ENCODE measurements at regions of chr20 and their contacts with region 1.

Region 1: GRCh38 chr20:1437235-1437904 is 29.3 kb downstream of the NSFL1C start:
- DNase-seq: peak; percentile 85 to 91
- ATAC-seq: peak; percentile 68 to 83; a peak in 4 of 6 replicates
- H3K4me3 ChIP-seq: no peak overlapping the region
- H3K27ac ChIP-seq: no peak overlapping the region
- H3K4me1 ChIP-seq: no peaks in the 10 kb centered on the region
- CTCF ChIP-seq: peak; percentile 96
- EP300 ChIP-seq: no peak
- POLR2A ChIP-seq: no peak
- RAD21 ChIP-seq: peak; percentile 86 to 90

Region 2: DNA sequence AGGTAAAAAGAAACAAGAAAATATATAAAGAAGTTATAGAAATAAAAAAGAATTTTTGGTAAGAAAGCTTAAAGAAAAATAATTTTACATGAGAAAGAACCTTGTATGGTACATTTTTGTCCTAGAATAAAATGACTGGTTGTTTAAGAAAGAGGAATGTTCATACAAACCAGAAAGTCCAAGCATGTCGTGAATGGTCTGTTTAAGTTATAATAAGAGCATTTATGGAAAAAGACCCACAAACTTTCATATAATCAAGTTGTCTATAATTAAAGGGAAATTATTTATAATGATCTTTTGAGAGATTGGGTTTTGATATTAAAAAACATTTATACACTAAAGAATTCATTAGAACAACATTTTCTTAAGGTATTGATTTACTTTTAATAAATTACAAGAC is 631.7 kb before region 1 on chr20:
- CTCF ChIA-PET with region 1: no interaction called
- POLR2A ChIA-PET with region 1: no interaction called
- DNase-seq: peak in 1 of 2 experiments; percentile 59
- ATAC-seq: no peak
- H3K4me3 ChIP-seq: no peak overlapping the region
- H3K27ac ChIP-seq: no peak overlapping the region
- H3K4me1 ChIP-seq: no peaks in the 10 kb centered on the region
- CTCF ChIP-seq: no peak
- EP300 ChIP-seq: no peak
- POLR2A ChIP-seq: no peak
- RAD21 ChIP-seq: no peak

Region 3: GRCh38 chr20:1313236-1313964 is 124.0 kb before region 1 on chr20:
- CTCF ChIA-PET with region 1: interaction called, 12 read pairs
- POLR2A ChIA-PET with region 1: no interaction called
- DNase-seq: peak; percentile 71 to 75
- ATAC-seq: peak; percentile 59 to 88; a peak in 4 of 6 replicates
- H3K4me3 ChIP-seq: no peak overlapping the region
- H3K27ac ChIP-seq: 0 out of 6 replicates have a peak overlapping the region, but pooled peaks of 1 of the 2 experiments have one; percentile 29
- H3K4me1 ChIP-seq: peaks cover 3% of the 10 kb centered on the region; the same call in 1 of the 3 replicates
- CTCF ChIP-seq: peak; percentile 83
- EP300 ChIP-seq: no peak
- POLR2A ChIP-seq: no peak
- RAD21 ChIP-seq: peak; percentile 79 to 86

Region 4: GRCh38 chr20:1417273-1417672 is 20.1 kb before region 1 on chr20:
- CTCF ChIA-PET with region 1: interaction called, 72 read pairs
- POLR2A ChIA-PET with region 1: no interaction called
- DNase-seq: no peak
- ATAC-seq: no peak
- H3K4me3 ChIP-seq: no peak overlapping the region
- H3K27ac ChIP-seq: peak overlapping the region; percentile 17 to 83; a peak in 4 of 6 replicates
- H3K4me1 ChIP-seq: peaks cover 25% of the 10 kb centered on the region
- CTCF ChIP-seq: no peak
- EP300 ChIP-seq: no peak
- POLR2A ChIP-seq: no peak
- RAD21 ChIP-seq: no peak

Region 5: DNA sequence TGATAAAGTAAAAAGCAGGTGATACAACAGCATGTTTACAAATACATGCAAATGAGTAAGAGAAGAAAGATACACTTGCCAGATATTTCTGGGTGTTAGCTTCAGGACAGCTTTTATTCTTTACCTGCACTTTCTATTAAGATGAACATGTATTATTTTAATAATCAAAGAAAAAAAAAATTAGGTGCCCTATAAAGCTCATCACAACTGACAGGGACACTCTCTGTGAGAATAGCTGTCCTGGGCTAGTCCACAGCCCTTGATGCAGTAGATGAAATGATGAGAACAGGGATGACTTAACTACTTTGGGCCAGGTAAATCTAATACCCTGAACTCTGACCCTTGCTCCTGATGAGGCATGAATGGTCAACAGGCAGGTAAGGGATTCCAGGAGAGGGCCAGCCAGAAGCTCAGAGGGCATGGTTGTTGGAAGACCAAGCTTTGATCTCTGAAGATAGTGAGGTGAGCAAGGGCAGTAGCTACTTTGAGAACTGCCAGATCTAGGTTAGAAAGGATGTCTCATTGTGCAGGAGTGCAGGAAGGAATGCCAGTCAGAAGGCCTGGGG is 13.6 kb after region 1 on chr20:
- CTCF ChIA-PET with region 1: interaction called, 139 read pairs
- POLR2A ChIA-PET with region 1: interaction called, 3 read pairs
- DNase-seq: no peak
- ATAC-seq: no peak
- H3K4me3 ChIP-seq: no peak overlapping the region
- H3K27ac ChIP-seq: no peak overlapping the region
- H3K4me1 ChIP-seq: no peaks in the 10 kb centered on the region
- CTCF ChIP-seq: no peak
- EP300 ChIP-seq: no peak
- POLR2A ChIP-seq: no peak
- RAD21 ChIP-seq: no peak